Motor neuron (in vitro differentiated cells): ENCODE measurements at regions of chr3 and their contacts with region 1.

Region 1: DNA sequence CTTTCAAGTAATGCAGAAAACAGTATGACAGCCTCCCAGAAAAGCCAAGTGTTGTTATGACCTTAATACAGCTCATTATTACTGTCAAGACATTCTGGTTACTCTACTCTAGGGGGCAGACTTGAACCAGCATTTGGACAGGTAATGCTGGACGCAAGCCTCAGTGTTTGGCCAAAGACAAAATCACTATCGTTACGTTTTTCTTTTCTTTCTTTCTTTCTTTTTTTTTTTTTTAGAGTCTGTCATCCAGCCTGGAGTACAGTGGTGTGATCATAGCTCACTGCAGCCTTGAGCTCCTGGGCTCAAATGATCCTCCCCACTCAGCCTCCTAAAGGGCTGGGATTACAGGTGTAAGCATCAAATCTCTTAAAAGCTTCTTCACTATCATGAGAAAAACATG is 29.4 kb upstream of the TMEM45A start:
- ATAC-seq: peak; percentile 85 to 98 (median 94)
- H3K4me3 ChIP-seq: no peak overlapping the region
- H3K27ac ChIP-seq: no peak overlapping the region
- H3K4me1 ChIP-seq: no peaks in the 10 kb centered on the region

Region 2: DNA sequence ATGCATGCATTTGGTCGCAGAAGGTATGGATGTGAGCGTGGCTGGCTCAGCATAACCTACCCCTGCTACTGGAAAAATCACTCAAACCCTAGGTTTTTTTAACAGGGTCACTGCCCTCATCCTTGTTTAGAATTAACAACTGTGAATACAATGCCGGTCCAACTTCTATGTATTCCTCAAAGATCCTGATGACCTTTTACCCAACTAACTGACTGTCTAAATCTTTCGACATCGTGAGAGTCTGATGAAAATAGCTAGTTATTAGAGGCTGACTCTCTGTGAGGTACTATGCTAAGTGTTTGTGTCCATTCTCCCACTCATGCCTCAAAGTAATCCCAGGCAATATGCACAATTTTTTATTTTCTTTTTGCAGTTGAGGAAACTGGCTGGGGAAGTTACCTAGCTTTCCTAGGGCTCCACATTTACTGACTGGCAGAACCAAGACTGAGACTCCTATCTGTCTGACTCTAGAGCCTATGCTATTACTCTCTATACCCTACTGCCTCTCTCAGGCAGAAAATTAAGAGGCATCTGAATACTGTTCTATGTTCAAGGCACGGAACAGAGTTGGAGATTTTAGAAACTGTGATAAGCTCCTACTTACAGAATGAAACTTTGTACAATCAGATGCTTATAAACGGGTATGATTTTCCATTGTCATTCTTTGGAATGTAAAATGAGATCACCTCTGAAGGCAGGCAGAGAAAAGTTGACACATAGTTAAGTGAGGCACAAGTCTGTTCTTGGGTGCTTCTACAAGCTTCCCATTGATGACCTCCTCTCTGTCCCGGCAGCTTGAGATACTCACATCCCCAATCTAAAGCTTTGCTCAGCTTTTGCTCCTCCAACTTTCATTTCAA is 405.1 kb before region 1 on chr3:
- in situ Hi-C with region 1: no loop called
- ATAC-seq: peak in 1 of 8 experiments; percentile 44
- H3K4me3 ChIP-seq: no peak overlapping the region
- H3K27ac ChIP-seq: no peak overlapping the region
- H3K4me1 ChIP-seq: no peaks in the 10 kb centered on the region

Region 3: GRCh38 chr3:100150473-100150872 is 312.5 kb before region 1 on chr3:
- in situ Hi-C with region 1: no loop called
- ATAC-seq: peak in 1 of 8 experiments; percentile 14
- H3K4me3 ChIP-seq: no peak overlapping the region
- H3K27ac ChIP-seq: no peak overlapping the region
- H3K4me1 ChIP-seq: peaks cover 3 to 5% of the 10 kb centered on the region in 2 donors

Region 4: GRCh38 chr3:100316641-100317069 is 146.3 kb before region 1 on chr3:
- in situ Hi-C with region 1: no loop called
- ATAC-seq: peak in 3 of 8 experiments; percentile 77 to 93 (median 93)
- H3K4me3 ChIP-seq: no peak overlapping the region
- H3K27ac ChIP-seq: no peak overlapping the region
- H3K4me1 ChIP-seq: peaks cover 0 to 2% of the 10 kb centered on the region in 2 donors

Region 5: GRCh38 chr3:100590114-100590839 is 127.3 kb after region 1 on chr3:
- in situ Hi-C with region 1: loop called in 3 of 9 experiments (anchors 5 to 25 kb)
- ATAC-seq: peak; percentile 73 to 86 (median 77)
- H3K4me3 ChIP-seq: peak overlapping the region in 1 of 5 donors; percentile 9
- H3K27ac ChIP-seq: no peak overlapping the region
- H3K4me1 ChIP-seq: no peaks in the 10 kb centered on the region

Region 6: GRCh38 chr3:100613721-100614390 is 150.9 kb after region 1 on chr3:
- in situ Hi-C with region 1: no loop called
- ATAC-seq: no peak
- H3K4me3 ChIP-seq: no peak overlapping the region
- H3K27ac ChIP-seq: no peak overlapping the region
- H3K4me1 ChIP-seq: no peaks in the 10 kb centered on the region

Region 7: DNA sequence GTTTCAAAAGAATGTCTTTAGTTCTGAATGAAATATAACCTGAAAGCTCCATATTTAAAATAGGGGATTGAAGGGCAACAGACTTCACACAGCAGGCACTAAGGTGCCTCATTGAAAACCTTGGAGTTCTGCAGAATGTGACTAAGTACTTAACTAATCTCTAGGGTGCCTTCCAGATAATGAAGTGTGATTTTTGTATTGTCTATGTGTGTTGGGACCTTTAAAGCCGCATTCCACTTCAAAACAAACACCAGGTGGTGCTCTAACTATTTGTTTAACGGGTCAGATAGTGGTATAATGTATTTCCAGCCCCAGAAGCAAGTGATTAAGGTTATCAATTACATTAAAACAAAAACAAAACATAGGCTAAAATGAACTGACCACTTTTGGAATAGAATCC is 274.3 kb after region 1 on chr3:
- in situ Hi-C with region 1: loop called in 1 of 9 experiments (anchors 25 kb)
- ATAC-seq: peak in 6 of 8 experiments; percentile 32 to 52 (median 44)
- H3K4me3 ChIP-seq: no peak overlapping the region
- H3K27ac ChIP-seq: no peak overlapping the region
- H3K4me1 ChIP-seq: no peaks in the 10 kb centered on the region

Region 8: DNA sequence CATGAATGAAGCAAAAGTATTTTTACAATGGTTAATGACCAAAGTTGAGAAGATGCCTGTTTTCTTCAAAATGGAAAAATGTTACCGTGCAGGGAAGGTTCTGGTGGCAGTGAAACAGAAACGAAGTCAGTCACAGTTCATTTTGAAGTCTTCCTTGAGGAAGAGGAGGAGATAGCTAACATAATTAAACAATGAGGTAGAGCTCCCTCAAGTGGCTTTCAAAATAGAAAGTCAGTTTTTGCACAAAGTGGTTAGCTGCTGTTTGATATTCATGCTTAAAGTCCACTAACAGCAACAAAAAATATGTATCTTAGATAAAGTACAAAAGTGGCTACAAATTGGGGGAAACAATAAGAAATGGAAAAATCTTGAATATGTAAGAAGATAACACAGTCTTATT is 333.6 kb after region 1 on chr3:
- in situ Hi-C with region 1: loop called in 1 of 9 experiments (anchors 25 kb)
- ATAC-seq: peak in 3 of 8 experiments; percentile 32 to 53 (median 50)
- H3K4me3 ChIP-seq: no peak overlapping the region
- H3K27ac ChIP-seq: no peak overlapping the region
- H3K4me1 ChIP-seq: no peaks in the 10 kb centered on the region